Caco-2 (cell line): ENCODE measurements at regions of chr9 and their contacts with region 1.

Region 1: DNA sequence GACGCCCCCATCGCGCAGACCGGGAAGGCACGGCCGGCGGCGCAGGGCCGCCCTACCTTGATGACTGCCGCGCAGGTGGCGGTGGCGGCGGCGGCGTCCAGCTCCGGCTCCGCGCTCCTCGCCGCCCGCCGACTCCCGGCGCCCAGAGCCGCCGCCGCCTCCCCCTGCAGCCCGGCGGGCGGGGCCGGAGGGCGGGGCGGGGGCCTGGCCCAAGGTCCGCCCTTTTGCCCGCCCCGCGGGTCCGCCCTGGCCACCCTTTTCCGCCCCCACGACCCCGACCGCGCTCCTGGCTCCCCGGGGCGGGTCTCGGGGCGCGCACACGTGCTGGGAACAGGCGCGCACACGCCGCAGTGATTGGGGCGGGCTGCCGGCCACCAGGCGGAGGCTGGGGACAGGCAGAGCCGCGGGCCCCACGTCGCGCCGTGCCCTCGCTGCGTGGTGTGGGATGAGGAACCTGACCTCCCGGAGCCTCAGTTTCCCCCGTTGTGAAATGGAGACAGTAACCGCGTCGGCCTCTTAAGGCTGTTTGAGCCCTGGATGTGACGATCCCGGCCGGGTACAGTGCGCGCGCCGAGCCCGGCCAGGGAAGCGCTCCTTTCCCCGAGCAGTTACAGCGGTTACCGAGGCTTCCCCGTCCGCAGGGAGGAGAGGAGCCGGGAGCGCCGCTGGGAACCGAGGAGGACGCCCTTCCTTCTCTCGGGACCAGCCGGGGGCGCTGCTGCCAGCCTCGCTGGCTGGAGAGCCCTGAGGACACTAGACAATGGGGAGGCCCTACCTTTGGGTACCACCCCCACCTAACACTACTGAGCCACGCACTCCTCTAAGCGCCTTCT is at the start of gene CORO2A:
- DNase-seq: peak; percentile 88 to 93
- H3K4me3 ChIP-seq: peak within 1 kb of the TSS; percentile 69
- H3K4me3 Mint-ChIP-seq: peak within 1 kb of the TSS; percentile 81
- H3K27ac Mint-ChIP-seq: peak within 1 kb of the TSS; percentile 67
- H3K4me1 ChIP-seq: peaks cover 25% of the 10 kb centered on the region
- H3K4me1 Mint-ChIP-seq: peaks cover 28% of the 10 kb centered on the region
- H3K27me3 ChIP-seq: no peaks in the 10 kb centered on the region
- H3K27me3 Mint-ChIP-seq: no peaks in the 10 kb centered on the region
- CTCF ChIP-seq: peak; percentile 10 to 76
- total RNA-seq, gene CORO2A: 18.9 and 20.0 TPM in 2 replicates

Region 2: DNA sequence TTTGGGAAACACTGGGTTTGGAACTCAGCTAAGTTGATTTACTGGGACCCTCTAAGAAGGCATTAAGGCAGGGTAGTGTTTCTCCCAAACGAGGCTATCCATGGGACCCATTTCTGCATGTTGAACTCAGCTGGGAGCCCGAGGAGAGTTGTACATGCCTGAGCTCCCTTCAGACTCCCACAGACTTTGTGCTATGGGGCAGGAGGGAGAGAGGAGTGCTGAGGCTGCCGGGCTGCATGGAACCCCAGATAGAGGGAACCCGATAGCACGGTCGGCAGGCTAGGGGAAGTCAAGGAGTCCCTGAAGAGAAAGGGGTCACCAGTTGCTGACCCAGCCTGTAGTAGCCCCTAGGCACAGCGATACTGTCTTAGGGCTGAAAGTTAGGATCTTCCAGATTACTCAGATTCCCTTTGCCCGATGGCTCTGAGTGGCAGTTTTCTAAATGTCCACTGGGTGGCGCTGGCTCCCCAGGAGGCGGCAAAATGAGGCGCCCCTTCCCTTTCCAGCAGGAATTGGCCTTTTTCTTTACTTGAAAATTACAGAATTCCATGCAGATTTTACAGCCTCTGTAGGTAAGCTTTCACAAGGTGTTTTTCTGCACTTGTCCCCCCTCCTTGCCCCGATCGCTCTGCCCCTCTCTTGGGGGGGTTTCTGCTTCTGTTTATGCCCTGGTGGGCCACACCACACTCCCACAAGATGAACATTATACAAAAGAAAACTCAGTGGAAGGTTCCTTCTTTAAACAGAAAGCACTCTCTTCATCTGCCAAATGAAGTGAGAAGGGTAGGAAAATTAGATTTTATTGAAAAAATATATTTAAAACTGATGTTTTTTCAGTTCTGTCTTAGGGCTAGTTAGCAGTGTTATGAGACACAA is 118.4 kb before region 1 on chr9:
- CTCF ChIA-PET with region 1: interaction called, 3 read pairs
- POLR2A ChIA-PET with region 1: no interaction called
- intact Hi-C with region 1: loop called (anchors 2 kb)
- DNase-seq: peak; percentile 71 to 80
- H3K4me3 ChIP-seq: no peak overlapping the region
- H3K4me3 Mint-ChIP-seq: no peak overlapping the region
- H3K27ac Mint-ChIP-seq: peak overlapping the region; percentile 27
- H3K4me1 ChIP-seq: peaks cover 16% of the 10 kb centered on the region
- H3K4me1 Mint-ChIP-seq: peaks cover 12% of the 10 kb centered on the region
- H3K27me3 ChIP-seq: no peaks in the 10 kb centered on the region
- H3K27me3 Mint-ChIP-seq: no peaks in the 10 kb centered on the region
- CTCF ChIP-seq: peak; percentile 90 to 96

Region 3: DNA sequence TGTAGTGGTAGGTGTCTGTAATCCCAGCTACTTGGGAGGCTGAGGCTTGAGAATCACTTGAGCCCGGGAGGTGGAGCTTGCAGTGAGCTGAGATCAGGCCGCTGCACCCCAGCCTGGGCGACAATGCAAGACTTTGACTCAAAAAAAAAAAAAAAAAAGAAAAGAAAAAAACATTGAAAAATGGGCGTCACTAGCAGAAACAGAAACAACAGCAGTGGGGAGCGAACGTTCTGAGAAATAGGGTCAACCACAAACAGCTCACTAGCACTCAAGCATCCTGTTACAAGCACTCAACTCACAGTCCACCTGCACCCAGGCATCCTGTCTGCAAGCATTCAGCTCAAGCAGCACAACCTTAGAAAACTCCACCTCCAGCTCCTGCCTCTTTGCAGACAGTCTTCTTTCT is 90.8 kb before region 1 on chr9:
- CTCF ChIA-PET with region 1: no interaction called
- POLR2A ChIA-PET with region 1: no interaction called
- intact Hi-C with region 1: no loop called
- DNase-seq: no peak
- H3K4me3 ChIP-seq: no peak overlapping the region
- H3K4me3 Mint-ChIP-seq: no peak overlapping the region
- H3K27ac Mint-ChIP-seq: no peak overlapping the region
- H3K4me1 ChIP-seq: peaks cover 30% of the 10 kb centered on the region
- H3K4me1 Mint-ChIP-seq: peaks cover 25% of the 10 kb centered on the region
- H3K27me3 ChIP-seq: no peaks in the 10 kb centered on the region
- H3K27me3 Mint-ChIP-seq: no peaks in the 10 kb centered on the region
- CTCF ChIP-seq: no peak

Region 4: DNA sequence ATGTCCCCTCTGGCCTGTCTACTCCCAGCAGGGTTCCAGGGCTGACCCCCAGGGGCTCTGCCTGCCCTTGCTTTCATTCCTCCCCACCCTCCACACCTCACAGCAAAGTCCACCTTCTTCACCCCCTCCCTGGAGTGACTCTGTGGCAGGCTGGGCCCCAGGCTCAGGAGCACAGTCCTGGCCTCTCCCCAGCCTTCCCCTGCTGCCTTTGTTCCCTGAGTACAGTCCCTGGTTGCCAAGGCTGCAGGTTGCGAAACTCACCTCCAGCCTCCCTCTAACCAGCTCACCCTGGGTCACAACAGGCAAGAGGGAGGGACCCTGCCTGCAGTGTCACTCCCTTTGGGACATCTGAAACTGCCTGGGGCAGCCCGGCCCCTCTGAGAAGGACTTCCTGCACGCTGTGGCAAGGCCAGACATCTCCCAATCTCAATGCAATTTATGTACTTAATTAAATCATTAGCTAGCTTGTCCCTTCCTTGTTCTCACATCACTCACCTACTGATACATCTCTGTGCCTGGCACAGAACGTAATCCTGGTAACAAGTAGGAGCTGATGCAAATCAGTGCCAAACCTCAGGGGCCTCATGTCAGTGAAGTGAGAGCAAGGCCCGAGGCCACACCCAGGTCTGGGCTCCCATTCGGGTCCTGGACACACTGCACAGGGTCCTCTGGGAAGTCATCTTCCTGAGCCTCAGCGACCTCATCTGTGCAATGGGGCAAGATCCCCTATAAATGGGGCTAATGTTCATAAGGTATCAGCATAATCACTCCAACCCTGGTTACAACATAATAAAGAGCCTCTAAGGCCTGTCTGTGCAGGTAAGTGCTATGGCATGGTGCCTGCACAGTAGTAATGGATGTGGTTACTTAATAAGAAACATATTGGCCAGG is 46.4 kb before region 1 on chr9:
- CTCF ChIA-PET with region 1: no interaction called
- POLR2A ChIA-PET with region 1: no interaction called
- intact Hi-C with region 1: loop called (anchors 1 kb)
- DNase-seq: peak; percentile 86 to 92
- H3K4me3 ChIP-seq: no peak overlapping the region
- H3K4me3 Mint-ChIP-seq: peak overlapping the region; percentile 25
- H3K27ac Mint-ChIP-seq: peak overlapping the region; percentile 78
- H3K4me1 ChIP-seq: peaks cover 40% of the 10 kb centered on the region
- H3K4me1 Mint-ChIP-seq: peaks cover 25% of the 10 kb centered on the region
- H3K27me3 ChIP-seq: no peaks in the 10 kb centered on the region
- H3K27me3 Mint-ChIP-seq: no peaks in the 10 kb centered on the region
- CTCF ChIP-seq: no peak

Region 5: DNA sequence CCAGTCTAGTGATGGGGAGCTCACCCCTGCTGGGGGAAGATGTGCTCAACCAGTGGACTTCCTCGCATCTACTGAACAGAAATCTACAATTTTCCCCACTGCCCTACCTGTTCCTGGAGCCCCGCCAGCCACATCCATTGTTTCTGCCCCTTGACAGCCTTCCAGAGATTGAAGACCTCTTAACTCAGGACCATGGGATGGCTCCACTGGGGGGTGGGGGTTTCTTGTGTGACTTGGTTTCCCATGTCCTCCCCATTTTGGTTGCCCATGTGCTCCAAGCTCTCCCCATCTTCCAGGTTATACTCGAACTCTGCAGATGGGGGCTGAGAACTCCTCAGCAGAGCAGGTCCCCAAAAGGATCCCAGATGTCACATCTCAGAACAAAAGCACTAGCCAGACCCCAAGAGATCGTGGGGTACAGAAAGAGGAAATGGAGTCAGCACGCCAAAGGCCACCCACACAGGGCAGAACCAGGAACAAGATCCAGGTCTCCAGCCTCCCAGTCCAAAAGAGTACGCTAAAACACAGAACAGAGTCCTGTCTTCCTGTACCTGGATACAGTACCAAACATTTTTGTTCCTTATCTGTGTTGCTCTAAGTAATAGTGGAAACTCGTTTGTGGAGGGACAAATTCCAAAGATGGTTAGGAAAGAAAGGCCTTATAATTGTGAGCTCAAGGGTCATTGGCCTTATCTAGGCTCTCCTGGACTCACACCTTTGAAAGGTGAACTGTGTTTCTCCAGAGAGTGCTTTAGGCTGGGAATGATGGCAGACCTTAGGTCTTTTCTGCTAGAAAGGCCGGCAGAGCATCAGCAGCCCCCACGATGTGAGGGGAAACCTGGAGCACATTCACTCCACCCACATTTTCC is 16.1 kb before region 1 on chr9:
- CTCF ChIA-PET with region 1: interaction called, 4 read pairs
- POLR2A ChIA-PET with region 1: interaction called, 5 read pairs
- intact Hi-C with region 1: loop called (anchors 1 kb)
- DNase-seq: peak; percentile 62 to 65
- H3K4me3 ChIP-seq: no peak overlapping the region
- H3K4me3 Mint-ChIP-seq: peak overlapping the region; percentile 64
- H3K27ac Mint-ChIP-seq: peak overlapping the region; percentile 91
- H3K4me1 ChIP-seq: peaks cover 60% of the 10 kb centered on the region
- H3K4me1 Mint-ChIP-seq: peaks cover 45% of the 10 kb centered on the region
- H3K27me3 ChIP-seq: no peaks in the 10 kb centered on the region
- H3K27me3 Mint-ChIP-seq: no peaks in the 10 kb centered on the region
- CTCF ChIP-seq: no peak

Region 6: GRCh38 chr9:98215821-98216220 is 23.1 kb after region 1 on chr9:
- CTCF ChIA-PET with region 1: interaction called, 3 read pairs
- POLR2A ChIA-PET with region 1: no interaction called
- intact Hi-C with region 1: loop called (anchors 2 kb)
- DNase-seq: peak in 1 of 2 experiments; percentile 45
- H3K4me3 ChIP-seq: no peak overlapping the region
- H3K4me3 Mint-ChIP-seq: no peak overlapping the region
- H3K27ac Mint-ChIP-seq: no peak overlapping the region
- H3K4me1 ChIP-seq: peaks cover 3% of the 10 kb centered on the region; the same call in 1 of the 2 replicates
- H3K4me1 Mint-ChIP-seq: no peaks in the 10 kb centered on the region
- H3K27me3 ChIP-seq: no peaks in the 10 kb centered on the region
- H3K27me3 Mint-ChIP-seq: no peaks in the 10 kb centered on the region
- CTCF ChIP-seq: peak in 1 of 2 experiments; percentile 53

Region 7: DNA sequence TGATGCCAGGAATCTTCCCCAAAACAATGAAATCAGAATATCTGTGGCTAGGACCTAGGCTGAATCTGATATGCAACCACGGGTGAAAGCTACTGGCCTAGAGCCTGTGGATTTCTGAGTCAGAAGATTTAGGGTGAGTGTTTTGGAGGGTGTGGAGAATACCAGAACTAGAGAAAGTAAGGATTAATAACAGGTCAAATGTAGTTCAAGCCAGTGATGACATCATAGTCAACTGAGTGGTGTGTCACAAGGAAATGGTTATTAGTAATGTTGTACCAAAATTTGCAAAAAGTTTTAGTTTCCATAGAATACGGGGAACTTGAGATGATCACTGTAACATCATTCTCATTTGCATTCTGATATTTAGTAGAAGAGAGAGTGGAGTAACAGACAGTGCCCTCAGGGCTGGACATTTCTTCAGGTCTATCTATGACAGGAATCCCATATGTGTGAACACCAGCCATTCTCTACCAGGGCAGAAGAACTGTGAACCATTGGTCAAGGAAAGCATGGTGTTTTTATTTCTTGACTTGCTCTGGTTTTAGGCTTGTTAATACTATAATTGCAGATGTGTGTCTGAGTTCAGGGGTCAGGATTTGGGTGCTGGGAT is 618.4 kb after region 1 on chr9:
- CTCF ChIA-PET with region 1: no interaction called
- POLR2A ChIA-PET with region 1: no interaction called
- intact Hi-C with region 1: no loop called
- DNase-seq: no peak
- H3K4me3 ChIP-seq: no peak overlapping the region
- H3K4me3 Mint-ChIP-seq: no peak overlapping the region
- H3K27ac Mint-ChIP-seq: no peak overlapping the region
- H3K4me1 ChIP-seq: peaks cover 20% of the 10 kb centered on the region
- H3K4me1 Mint-ChIP-seq: peaks cover 15% of the 10 kb centered on the region
- H3K27me3 ChIP-seq: no peaks in the 10 kb centered on the region
- H3K27me3 Mint-ChIP-seq: no peaks in the 10 kb centered on the region
- CTCF ChIP-seq: no peak